ENCODE measurements at regions of chr6 and their contacts with region 1.

Region 1: GRCh38 chr6:117906853-117907599 is at the start of gene SLC35F1:
- H3K4me3 ChIP-seq: peak within 1 kb of the TSS; percentile 79
- H3K27ac ChIP-seq: peak within 1 kb of the TSS; percentile 84
- H3K4me1 ChIP-seq: 0 out of 2 replicates have a peak, but pooled peaks cover 2% of the 10 kb centered on the region
- CTCF ChIP-seq: peak; percentile 86

Region 2: GRCh38 chr6:117919775-117920729 is 13.0 kb after region 1 on chr6:
- CTCF ChIA-PET with region 1: interaction called, 11 read pairs
- POLR2A ChIA-PET with region 1: interaction called, 4 read pairs
- H3K4me3 ChIP-seq: peak overlapping the region; percentile 45
- H3K27ac ChIP-seq: peak overlapping the region; percentile 44; the same call in 1 of the 2 replicates
- H3K4me1 ChIP-seq: peaks cover 6% of the 10 kb centered on the region; the same call in 1 of the 2 replicates
- CTCF ChIP-seq: 0 out of 2 replicates have a peak, but pooled peaks have one; percentile 32

Region 3: GRCh38 chr6:118408863-118409262 is 501.8 kb after region 1 on chr6:
- CTCF ChIA-PET with region 1: no interaction called
- POLR2A ChIA-PET with region 1: no interaction called
- H3K4me3 ChIP-seq: no peak overlapping the region
- H3K27ac ChIP-seq: no peak overlapping the region
- H3K4me1 ChIP-seq: no peaks in the 10 kb centered on the region
- CTCF ChIP-seq: no peak

Measured in HEK293 (cell line).